ENCODE measurements at regions of chr5 and their contacts with region 1.

Region 1: GRCh38 chr5:157761690-157762621 is 18.4 kb downstream of the LSM11 start:
- DNase-seq: peak in 4 of 5 donors; percentile 29 to 46 (median 41)
- H3K4me3 ChIP-seq: no peak overlapping the region
- H3K4me3 Mint-ChIP-seq: no peak overlapping the region
- H3K27ac ChIP-seq: no peak overlapping the region
- H3K27ac Mint-ChIP-seq: no peak overlapping the region
- H3K4me1 ChIP-seq: peaks cover 5% of the 10 kb centered on the region
- H3K4me1 Mint-ChIP-seq: peaks cover 0 to 4% (median 0%) of the 10 kb centered on the region in 4 donors
- H3K27me3 ChIP-seq: no peaks in the 10 kb centered on the region
- H3K27me3 Mint-ChIP-seq: no peaks in the 10 kb centered on the region

Region 2: GRCh38 chr5:157603333-157604190 is 158.4 kb before region 1 on chr5:
- CTCF ChIA-PET with region 1: no interaction called
- POLR2A ChIA-PET with region 1: no interaction called
- intact Hi-C with region 1: no loop called
- DNase-seq: peak; percentile 72 to 93 (median 75)
- H3K4me3 ChIP-seq: no peak overlapping the region
- H3K4me3 Mint-ChIP-seq: peak overlapping the region; percentile 39 to 84 (median 70)
- H3K27ac ChIP-seq: peak overlapping the region; percentile 68
- H3K27ac Mint-ChIP-seq: peak overlapping the region; percentile 84 to 96 (median 86)
- H3K4me1 ChIP-seq: peaks cover 90% of the 10 kb centered on the region
- H3K4me1 Mint-ChIP-seq: peaks cover 45 to 69% (median 60%) of the 10 kb centered on the region in 4 donors
- H3K27me3 ChIP-seq: no peaks in the 10 kb centered on the region
- H3K27me3 Mint-ChIP-seq: no peaks in the 10 kb centered on the region

Region 3: DNA sequence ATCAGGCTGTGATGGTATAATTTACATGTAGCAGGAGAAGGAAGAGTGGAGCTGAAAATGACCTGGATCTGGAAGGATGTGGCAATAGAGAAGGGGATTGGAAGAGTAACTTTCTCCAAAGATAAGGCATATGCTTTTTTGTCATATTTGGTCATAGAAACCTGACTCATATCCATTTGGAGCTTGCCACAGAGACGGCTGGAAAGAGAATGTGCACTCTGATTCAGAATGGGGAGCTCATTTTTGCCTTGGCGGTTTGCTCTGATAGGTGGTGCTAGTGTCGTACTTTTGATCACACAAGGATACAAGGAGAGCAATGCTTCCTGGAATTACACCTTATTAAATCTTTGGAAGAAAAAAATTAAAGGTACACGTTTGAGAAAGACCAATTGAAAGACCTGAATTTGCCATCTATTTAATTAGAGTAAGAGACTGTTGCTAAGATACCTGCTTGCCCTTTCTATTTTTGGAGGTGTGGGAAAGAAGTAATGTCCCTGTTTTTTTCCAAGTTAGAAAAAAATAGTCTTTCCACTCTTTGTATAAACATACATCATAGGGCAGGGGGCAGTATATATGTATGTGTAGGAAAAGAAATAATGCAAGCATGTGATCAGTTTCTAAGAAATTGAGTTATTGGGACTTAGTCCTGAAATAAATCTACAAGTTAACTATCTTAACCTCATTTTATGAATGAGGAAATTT is 13.0 kb before region 1 on chr5:
- CTCF ChIA-PET with region 1: interaction called, 24 read pairs
- POLR2A ChIA-PET with region 1: no interaction called
- intact Hi-C with region 1: no loop called
- DNase-seq: no peak
- H3K4me3 ChIP-seq: no peak overlapping the region
- H3K4me3 Mint-ChIP-seq: no peak overlapping the region
- H3K27ac ChIP-seq: no peak overlapping the region
- H3K27ac Mint-ChIP-seq: no peak overlapping the region
- H3K4me1 ChIP-seq: peaks cover 12% of the 10 kb centered on the region
- H3K4me1 Mint-ChIP-seq: peaks cover 13 to 21% (median 19%) of the 10 kb centered on the region in 4 donors
- H3K27me3 ChIP-seq: no peaks in the 10 kb centered on the region
- H3K27me3 Mint-ChIP-seq: no peaks in the 10 kb centered on the region

Region 4: GRCh38 chr5:157994906-157995519 is 233.1 kb after region 1 on chr5:
- CTCF ChIA-PET with region 1: interaction called, 5 read pairs
- POLR2A ChIA-PET with region 1: no interaction called
- intact Hi-C with region 1: loop called (anchors 1 kb)
- DNase-seq: peak; percentile 31 to 40 (median 34)
- H3K4me3 ChIP-seq: peak overlapping the region; percentile 2 to 15
- H3K4me3 Mint-ChIP-seq: peak overlapping the region; percentile 66 to 84 (median 76)
- H3K27ac ChIP-seq: no peak overlapping the region
- H3K27ac Mint-ChIP-seq: peak overlapping the region in 2 of 7 donors; percentile 11 to 76
- H3K4me1 ChIP-seq: peaks cover 26% of the 10 kb centered on the region
- H3K4me1 Mint-ChIP-seq: peaks cover 16 to 33% (median 21%) of the 10 kb centered on the region in 4 donors
- H3K27me3 ChIP-seq: peaks cover 14% of the 10 kb centered on the region
- H3K27me3 Mint-ChIP-seq: peaks cover 26 to 28% of the 10 kb centered on the region in 2 donors

Measured in CD4-positive, alpha-beta memory T cell (primary cell).